Dorsolateral prefrontal cortex (tissue), 120 donors: ENCODE measurements at regions of chr5 and their contacts with region 1.

Region 1: DNA sequence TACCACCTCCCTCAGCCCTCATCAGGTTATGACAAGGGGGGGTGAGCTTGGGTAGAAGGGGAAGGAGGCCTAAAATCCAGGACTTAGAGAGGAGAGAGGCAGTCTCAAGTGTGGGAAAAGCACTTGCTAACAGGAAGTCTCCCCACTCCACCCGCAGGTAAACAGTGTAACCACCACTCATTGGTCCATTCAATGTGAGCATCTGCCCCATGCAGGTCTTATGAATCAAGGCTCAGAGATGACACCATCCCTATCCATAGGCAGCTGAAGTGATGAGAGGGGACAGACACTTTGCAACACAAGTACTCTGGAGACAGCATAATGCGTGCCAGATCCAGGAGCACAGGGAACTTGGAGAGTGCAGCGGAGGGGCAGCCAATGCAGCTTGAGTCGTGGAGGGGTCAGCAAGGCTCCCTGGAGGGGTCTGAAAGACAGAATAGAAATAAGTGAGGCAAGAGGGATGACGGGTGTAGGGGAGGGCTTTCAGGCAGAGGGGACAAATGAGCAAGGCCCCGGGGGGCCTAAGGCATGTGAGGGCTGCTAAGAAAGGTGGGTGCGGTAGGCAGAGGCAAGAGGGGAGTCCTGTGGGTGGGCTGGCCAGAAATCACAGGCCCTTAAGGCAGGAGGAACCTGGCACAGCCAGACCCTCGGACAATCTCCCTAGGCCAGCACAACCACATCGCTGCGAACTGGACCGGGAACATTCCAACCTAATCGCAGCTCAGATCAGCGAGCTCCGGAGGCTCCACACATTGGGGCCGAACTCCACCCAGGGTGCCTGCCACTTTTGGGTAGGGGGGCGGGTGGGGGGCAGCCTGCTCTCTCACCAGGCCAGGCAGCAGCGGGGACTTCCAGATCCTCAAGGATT is 23.0 kb upstream of the CYSTM1 start:
- DNase-seq: no peak
- H3K4me3 ChIP-seq: no peak overlapping the region
- H3K27ac ChIP-seq: no peak overlapping the region
- H3K27me3 ChIP-seq: no peaks in the 10 kb centered on the region
- CTCF ChIP-seq: no peak

Region 2: DNA sequence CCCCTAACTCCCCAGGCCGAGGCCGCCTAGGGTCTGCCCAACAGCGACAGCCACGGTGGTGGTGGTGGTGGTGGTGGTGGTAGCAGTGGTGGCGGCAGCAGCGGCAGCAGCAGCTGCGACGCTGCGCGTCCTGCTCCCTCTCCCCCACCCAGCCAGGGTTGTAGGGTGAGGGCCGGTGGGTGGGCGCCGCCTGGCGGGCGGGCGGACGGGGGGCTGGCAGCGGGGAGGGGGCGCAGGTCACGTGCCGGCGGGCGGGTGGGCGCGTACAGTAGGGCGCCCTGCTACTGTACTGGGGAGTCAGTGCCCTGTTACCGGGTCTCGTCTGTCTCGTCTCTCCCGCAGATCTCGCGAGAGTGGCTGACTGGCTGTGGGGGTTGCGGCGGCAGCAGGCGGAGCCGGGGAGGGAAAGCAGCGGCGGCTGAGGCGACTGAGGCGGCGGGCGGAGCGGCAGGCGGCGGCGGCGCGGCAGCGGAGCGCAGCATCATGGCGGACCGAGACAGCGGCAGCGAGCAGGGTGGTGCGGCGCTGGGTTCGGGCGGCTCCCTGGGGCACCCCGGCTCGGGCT is 38.2 kb before region 1 on chr5 and contains the start of gene PURA:
- intact Hi-C with region 1: loop called in 1 of 2 experiments (anchors 5 kb)
- DNase-seq: peak; percentile 66 to 92 (median 88)
- H3K4me3 ChIP-seq: peak within 1 kb of the TSS; percentile 54 to 89 (median 75)
- H3K27ac ChIP-seq: peak within 1 kb of the TSS; percentile 63 to 95 (median 89)
- H3K27me3 ChIP-seq: no peaks in the 10 kb centered on the region
- CTCF ChIP-seq: peak in 51 of 56 donors; percentile 20 to 68 (median 50)
- total RNA-seq, gene PURA: 69.0 to 107 (median 89.1) TPM